ENCODE measurements at regions of chr15 and their contacts with region 1.

Region 1: GRCh38 chr15:89358755-89359439 is 24.3 kb upstream of the POLG start:
- DNase-seq: peak; percentile 6
- H3K4me3 ChIP-seq: peak overlapping the region; percentile 45
- H3K27me3 ChIP-seq: peaks cover 67% of the 10 kb centered on the region
- CTCF ChIP-seq: peak; percentile 91

Region 2: GRCh38 chr15:89346516-89347231 is 12.2 kb before region 1 on chr15:
- CTCF ChIA-PET with region 1: interaction called, 94 read pairs
- POLR2A ChIA-PET with region 1: no interaction called
- DNase-seq: no peak
- H3K4me3 ChIP-seq: no peak overlapping the region
- H3K27me3 ChIP-seq: peaks cover 31% of the 10 kb centered on the region
- CTCF ChIP-seq: no peak

Region 3: GRCh38 chr15:89391685-89392257 is 32.9 kb after region 1 on chr15:
- CTCF ChIA-PET with region 1: interaction called, 38 read pairs
- POLR2A ChIA-PET with region 1: no interaction called
- DNase-seq: no peak
- H3K4me3 ChIP-seq: no peak overlapping the region
- H3K27me3 ChIP-seq: peaks cover 43% of the 10 kb centered on the region
- CTCF ChIP-seq: no peak

Region 4: GRCh38 chr15:89430530-89431341 is 71.8 kb after region 1 on chr15:
- CTCF ChIA-PET with region 1: interaction called, 164 read pairs
- POLR2A ChIA-PET with region 1: no interaction called
- DNase-seq: peak; percentile 6
- H3K4me3 ChIP-seq: peak overlapping the region; percentile 35
- H3K27me3 ChIP-seq: peaks cover 11% of the 10 kb centered on the region
- CTCF ChIP-seq: peak; percentile 97

Region 5: DNA sequence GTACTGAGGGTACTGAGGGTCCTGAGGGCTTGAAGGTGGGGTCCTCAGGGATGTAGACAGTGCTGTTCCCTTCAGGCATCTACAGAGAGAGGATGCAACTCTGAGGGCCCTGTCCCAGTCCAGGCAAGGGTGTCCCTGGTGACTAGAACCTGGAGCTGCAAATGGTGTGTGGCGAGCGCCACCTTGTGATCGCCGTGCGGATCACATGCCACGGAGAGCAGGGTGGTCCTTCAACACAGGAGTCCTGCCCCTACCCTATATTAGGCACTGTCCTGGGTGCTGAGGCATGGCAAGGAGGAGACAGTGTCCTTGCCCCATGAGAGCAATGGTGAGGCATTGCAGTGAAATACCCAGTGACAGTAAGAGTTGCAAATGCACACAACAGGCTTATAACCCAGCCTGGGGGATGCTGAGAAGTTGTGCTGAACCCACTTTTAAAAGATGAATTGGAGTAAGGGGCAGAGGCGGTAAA is 113.9 kb after region 1 on chr15:
- CTCF ChIA-PET with region 1: interaction called, 81 read pairs
- POLR2A ChIA-PET with region 1: no interaction called
- DNase-seq: no peak
- H3K4me3 ChIP-seq: no peak overlapping the region
- H3K27me3 ChIP-seq: peaks cover 14% of the 10 kb centered on the region
- CTCF ChIP-seq: peak; percentile 85